ENCODE measurements at regions of chr1 and their contacts with region 1.

Region 1: DNA sequence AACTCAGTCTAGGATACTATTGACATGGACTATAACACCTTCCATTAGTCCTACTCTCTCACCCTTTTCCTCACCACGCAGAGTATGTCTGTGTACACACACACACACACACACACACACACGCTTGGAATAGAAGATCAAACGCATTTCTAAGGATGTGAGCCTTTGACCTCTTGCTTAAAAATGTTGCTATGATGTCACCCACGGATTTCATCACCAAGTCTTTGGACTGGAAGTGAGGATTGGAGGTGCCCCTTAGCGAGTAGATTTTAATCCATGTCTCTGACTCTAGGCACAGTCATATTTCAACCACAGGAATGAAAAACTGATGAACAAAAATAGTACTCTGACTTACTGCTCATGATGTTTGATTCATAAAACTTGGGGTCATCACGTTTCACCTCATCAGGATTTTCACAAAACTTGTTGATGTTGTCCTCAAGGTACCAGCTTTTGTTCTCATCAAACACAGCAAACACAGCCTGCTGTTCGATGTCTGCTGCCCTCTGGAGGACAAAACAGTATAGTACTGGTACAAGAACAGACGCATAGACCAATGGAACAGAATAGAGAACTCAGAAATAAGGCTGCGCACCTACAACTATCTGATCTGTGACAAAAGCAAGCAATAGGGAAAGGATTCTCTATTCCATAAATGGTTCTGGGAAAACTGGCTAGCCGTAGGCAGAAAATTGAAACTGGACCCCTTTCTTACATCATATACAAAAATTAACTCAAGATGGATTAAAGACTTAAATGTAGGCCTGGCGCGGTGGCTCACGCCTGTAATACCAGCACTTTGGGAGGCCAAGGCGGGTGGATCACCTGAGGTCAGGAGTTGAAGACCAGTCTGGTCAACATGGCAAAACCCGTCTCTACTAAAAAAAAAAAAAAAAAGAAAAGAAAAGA is 39.9 kb downstream of the F5 start:
- DNase-seq: peak; percentile 82 to 91 (median 87)
- H3K4me3 ChIP-seq: no peak overlapping the region
- H3K27ac ChIP-seq: no peak overlapping the region
- H3K4me1 ChIP-seq: no peaks in the 10 kb centered on the region
- H3K27me3 ChIP-seq: no peaks in the 10 kb centered on the region

Region 2: GRCh38 chr1:168603501-168604110 is 942.7 kb before region 1 on chr1:
- CTCF ChIA-PET with region 1: interaction called, 21 read pairs
- POLR2A ChIA-PET with region 1: no interaction called
- DNase-seq: peak; percentile 68 to 81 (median 76)
- H3K4me3 ChIP-seq: no peak overlapping the region
- H3K27ac ChIP-seq: no peak overlapping the region
- H3K4me1 ChIP-seq: no peaks in the 10 kb centered on the region
- H3K27me3 ChIP-seq: no peaks in the 10 kb centered on the region

Region 3: GRCh38 chr1:169466259-169467230 is 79.8 kb before region 1 on chr1:
- CTCF ChIA-PET with region 1: interaction called, 42 read pairs
- POLR2A ChIA-PET with region 1: no interaction called
- DNase-seq: peak; percentile 56 to 68 (median 64)
- H3K4me3 ChIP-seq: no peak overlapping the region
- H3K27ac ChIP-seq: no peak overlapping the region
- H3K4me1 ChIP-seq: peaks cover 0 to 20% (median 2%) of the 10 kb centered on the region in 4 experiments
- H3K27me3 ChIP-seq: no peaks in the 10 kb centered on the region

Region 4: DNA sequence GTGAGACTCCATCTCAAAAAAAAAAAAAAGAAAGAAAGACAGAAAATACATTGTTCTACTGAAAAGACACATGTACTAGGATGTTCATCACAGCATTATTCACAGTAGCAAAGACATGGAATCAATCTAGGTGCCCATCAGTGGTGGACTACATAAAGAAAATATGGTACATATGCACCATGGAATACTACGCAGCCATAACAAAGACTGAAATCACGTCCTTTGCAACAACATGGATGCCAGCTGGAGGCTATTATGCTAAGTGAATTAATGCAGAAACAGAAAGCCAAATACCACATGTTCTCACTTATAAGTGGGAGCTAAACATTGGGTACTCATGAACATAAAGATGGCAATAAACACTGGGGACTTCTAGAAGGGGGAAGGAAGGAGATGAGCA is 11.7 kb before region 1 on chr1:
- CTCF ChIA-PET with region 1: interaction called, 11 read pairs
- POLR2A ChIA-PET with region 1: no interaction called
- DNase-seq: no peak
- H3K4me3 ChIP-seq: no peak overlapping the region
- H3K27ac ChIP-seq: no peak overlapping the region
- H3K4me1 ChIP-seq: peaks cover 0 to under 1% (median 0%) of the 10 kb centered on the region in 4 experiments
- H3K27me3 ChIP-seq: no peaks in the 10 kb centered on the region

Region 5: DNA sequence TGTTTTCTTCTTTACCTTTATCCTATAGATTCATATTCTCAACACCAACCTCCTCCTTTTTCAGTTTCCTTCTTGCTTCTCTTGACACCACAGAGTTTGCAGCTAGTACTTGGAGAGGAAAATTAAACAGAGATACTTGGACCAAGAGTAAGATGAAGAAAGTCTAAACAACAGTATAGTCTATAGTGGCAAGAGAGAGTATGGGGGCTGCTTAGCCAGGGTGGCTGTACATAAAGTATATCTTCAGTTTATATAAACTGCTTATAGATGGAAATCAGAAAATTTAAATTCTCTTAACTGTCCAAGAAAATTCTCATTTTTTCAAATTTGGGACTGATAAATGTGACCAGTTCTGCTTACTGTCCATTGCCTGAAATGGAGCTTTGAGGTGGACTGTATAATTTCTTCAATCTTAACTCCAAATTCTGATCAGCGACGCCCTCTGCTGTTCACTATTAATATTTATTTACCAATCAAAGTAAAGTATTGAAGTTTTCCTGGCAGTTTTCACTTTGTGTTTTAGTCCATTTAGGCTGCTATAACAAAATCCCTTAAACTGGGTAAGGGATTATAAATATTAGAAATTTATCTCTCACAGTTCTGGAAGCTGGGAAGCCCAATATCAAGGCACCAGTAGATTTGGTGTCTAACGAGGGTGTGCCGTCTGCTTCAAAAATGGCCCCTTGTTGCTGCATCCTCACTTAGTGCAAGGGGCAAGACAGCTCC is 263.2 kb after region 1 on chr1:
- CTCF ChIA-PET with region 1: interaction called, 39 read pairs
- POLR2A ChIA-PET with region 1: no interaction called
- DNase-seq: peak; percentile 43 to 69 (median 58)
- H3K4me3 ChIP-seq: no peak overlapping the region
- H3K27ac ChIP-seq: no peak overlapping the region
- H3K4me1 ChIP-seq: no peaks in the 10 kb centered on the region
- H3K27me3 ChIP-seq: no peaks in the 10 kb centered on the region